ENCODE measurements at regions of chr22 and their contacts with region 1.

Region 1: DNA sequence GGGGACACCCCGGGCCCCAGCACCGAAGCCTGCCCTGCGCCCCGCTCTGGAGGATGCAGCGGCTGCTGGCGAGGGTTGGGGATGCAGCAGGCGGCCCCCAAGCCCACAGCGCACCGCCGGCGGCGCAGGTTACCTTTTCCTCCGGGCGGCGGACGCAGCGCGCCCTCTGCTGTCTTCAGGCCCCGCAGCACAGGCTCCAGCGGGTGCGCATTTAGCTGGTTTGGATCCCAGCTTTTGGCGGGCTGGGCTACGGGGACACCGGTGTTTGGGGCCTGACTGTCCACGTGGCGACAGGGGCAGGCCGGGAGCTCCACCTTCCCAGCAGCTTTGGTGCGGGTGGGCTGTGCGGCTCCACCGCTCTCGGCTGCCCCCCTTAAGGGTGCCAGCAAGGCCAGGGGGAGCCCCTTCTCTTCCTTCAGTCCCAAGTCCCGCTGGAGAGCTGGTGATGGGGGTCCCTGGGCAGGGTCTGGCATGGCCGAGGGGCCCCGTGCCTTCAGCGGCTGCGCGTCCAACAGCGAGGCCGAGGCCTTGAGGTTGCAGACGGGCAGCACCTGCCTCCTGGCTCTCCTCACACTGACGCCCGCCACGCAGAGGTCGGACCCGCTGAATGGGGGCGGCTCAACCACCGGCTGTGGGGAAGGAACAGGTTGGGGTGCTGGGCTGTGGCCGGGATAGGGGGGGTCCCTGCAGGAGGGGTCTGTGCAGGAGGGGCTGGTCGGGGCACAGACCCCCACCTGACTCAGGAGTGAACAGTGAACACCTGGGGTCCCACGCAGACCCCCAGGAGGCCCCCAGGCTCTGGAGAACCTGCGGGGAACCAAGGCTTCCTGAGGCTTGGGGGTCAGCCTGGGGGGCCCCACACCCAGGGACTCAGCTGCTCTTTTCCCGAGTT is 18.0 kb upstream of the IL17REL start:
- DNase-seq: peak; percentile 51 to 87 (median 64)
- ATAC-seq: peak in 3 of 4 donors; percentile 81 to 91 (median 84)
- H3K4me3 ChIP-seq: peak overlapping the region in 1 of 12 donors; percentile 26
- H3K27ac ChIP-seq: no peak overlapping the region
- H3K4me1 ChIP-seq: peaks cover 0 to 10% (median 4%) of the 10 kb centered on the region in 12 donors
- H3K27me3 ChIP-seq: peaks cover 0 to 47% (median 11%) of the 10 kb centered on the region in 9 donors
- CTCF ChIP-seq: peak; percentile 79 to 94 (median 87)
- POLR2A ChIP-seq: no peak

Region 2: GRCh38 chr22:49600891-49601431 is 429.6 kb before region 1 on chr22:
- intact Hi-C with region 1: no loop called
- DNase-seq: no peak
- ATAC-seq: no peak
- H3K4me3 ChIP-seq: no peak overlapping the region
- H3K27ac ChIP-seq: no peak overlapping the region
- H3K4me1 ChIP-seq: no peaks in the 10 kb centered on the region
- H3K27me3 ChIP-seq: no peaks in the 10 kb centered on the region
- CTCF ChIP-seq: no peak
- POLR2A ChIP-seq: no peak

Region 3: GRCh38 chr22:49767355-49768062 is 263.0 kb before region 1 on chr22:
- intact Hi-C with region 1: loop called in 7 of 10 experiments (anchors 5 to 10 kb)
- DNase-seq: peak in 2 of 5 donors; percentile 8 to 38
- ATAC-seq: no peak
- H3K4me3 ChIP-seq: no peak overlapping the region
- H3K27ac ChIP-seq: no peak overlapping the region
- H3K4me1 ChIP-seq: peaks cover 0 to 9% (median 0%) of the 10 kb centered on the region in 12 donors
- H3K27me3 ChIP-seq: no peaks in the 10 kb centered on the region
- CTCF ChIP-seq: peak; percentile 28 to 64 (median 52)
- POLR2A ChIP-seq: no peak

Region 4: GRCh38 chr22:49779853-49780697 is 250.5 kb before region 1 on chr22:
- intact Hi-C with region 1: loop called in 1 of 10 experiments (anchors 10 kb)
- DNase-seq: peak in 2 of 5 donors; percentile 37 to 66
- ATAC-seq: peak; percentile 50 to 65 (median 52)
- H3K4me3 ChIP-seq: no peak overlapping the region
- H3K27ac ChIP-seq: no peak overlapping the region
- H3K4me1 ChIP-seq: peaks cover 2 to 28% (median 14%) of the 10 kb centered on the region in 12 donors
- H3K27me3 ChIP-seq: no peaks in the 10 kb centered on the region
- CTCF ChIP-seq: no peak
- POLR2A ChIP-seq: no peak

Region 5: DNA sequence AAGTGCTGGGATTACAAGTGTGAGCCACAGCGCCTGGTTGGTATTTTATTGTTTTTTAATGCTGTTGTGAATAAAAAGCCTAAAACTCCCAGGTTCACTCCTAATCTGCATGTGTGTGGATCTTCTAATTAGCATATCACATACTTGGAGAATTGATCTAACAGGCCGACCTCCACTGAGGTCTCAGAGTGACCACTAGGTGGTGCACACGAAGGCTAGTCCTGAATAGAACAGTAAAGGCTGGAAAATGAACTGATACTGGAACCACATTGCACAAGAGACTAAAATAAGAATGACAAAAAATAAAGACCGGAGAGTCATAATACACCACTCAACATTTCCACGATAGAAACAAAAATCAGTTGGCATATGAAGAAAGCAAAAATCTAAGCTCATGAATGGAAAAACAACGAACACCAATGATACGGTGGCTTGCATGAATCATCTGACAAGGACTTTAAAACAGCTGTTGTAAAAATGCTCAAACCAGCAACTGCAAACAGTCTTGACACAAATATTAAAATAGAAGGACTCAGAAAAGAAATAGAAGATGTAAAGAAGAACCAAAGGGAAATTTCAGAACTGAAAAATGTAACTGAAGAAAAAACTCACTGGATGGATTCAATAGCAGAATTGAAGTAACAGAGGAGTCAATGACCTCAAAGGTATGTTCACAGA is 50.8 kb before region 1 on chr22:
- intact Hi-C with region 1: loop called in 1 of 10 experiments (anchors 5 kb)
- DNase-seq: peak in 3 of 5 donors; percentile 12 to 39 (median 24)
- ATAC-seq: peak in 3 of 4 donors; percentile 45 to 62 (median 53)
- H3K4me3 ChIP-seq: no peak overlapping the region
- H3K27ac ChIP-seq: no peak overlapping the region
- H3K4me1 ChIP-seq: peaks cover 0 to 18% (median 7%) of the 10 kb centered on the region in 12 donors
- H3K27me3 ChIP-seq: peaks cover 13 to 35% (median 19%) of the 10 kb centered on the region in 9 donors
- CTCF ChIP-seq: peak; percentile 42 to 66 (median 56)
- POLR2A ChIP-seq: no peak

Region 6: GRCh38 chr22:49992921-49993648 is 37.5 kb before region 1 on chr22:
- intact Hi-C with region 1: loop called in 4 of 10 experiments (anchors 5 kb)
- DNase-seq: peak in 4 of 5 donors; percentile 63 to 84 (median 70)
- ATAC-seq: peak; percentile 59 to 90 (median 84)
- H3K4me3 ChIP-seq: no peak overlapping the region
- H3K27ac ChIP-seq: no peak overlapping the region
- H3K4me1 ChIP-seq: peaks cover 0 to 8% (median 2%) of the 10 kb centered on the region in 12 donors
- H3K27me3 ChIP-seq: no peaks in the 10 kb centered on the region
- CTCF ChIP-seq: peak; percentile 62 to 81 (median 68)
- POLR2A ChIP-seq: no peak